Activated CD4-positive, alpha-beta T cell treated with anti-CD3 and anti-CD28 coated beads, Interleukin-2, amount 10 ng/mL, durations not matched to agents 24 days and 14 days (primary cell): ENCODE measurements at regions of chr13 and their contacts with region 1.

Region 1: GRCh38 chr13:77184455-77184854 is 142.4 kb downstream of the MYCBP2 start:
- DNase-seq: peak; percentile 70
- H3K4me3 Mint-ChIP-seq: peak overlapping the region; percentile 21
- H3K27ac Mint-ChIP-seq: peak overlapping the region; percentile 76
- H3K4me1 Mint-ChIP-seq: peaks cover 15% of the 10 kb centered on the region
- H3K27me3 Mint-ChIP-seq: no peaks in the 10 kb centered on the region

Region 2: DNA sequence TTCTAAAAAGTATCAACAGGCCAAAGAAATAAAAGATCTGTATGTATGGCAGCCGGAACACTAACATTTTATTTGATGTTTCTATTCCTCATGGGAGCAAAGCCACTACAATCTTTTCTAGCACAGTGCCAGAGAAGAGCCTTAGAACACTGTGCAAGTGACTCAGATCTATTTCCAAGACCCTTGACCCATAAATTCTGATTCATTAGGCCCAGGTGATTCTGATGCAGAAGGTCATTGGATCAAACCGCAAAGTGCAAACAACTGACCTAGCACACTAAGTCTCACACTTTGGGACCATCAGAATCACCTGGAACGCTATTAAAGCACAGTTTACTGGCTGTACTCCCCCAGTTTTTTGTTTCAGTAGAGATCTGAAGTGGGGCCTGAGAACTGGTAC is 54.9 kb after region 1 on chr13:
- intact Hi-C with region 1: loop called (anchors 10 kb)
- DNase-seq: no peak
- H3K4me3 Mint-ChIP-seq: no peak overlapping the region
- H3K27ac Mint-ChIP-seq: no peak overlapping the region
- H3K4me1 Mint-ChIP-seq: peaks cover 7% of the 10 kb centered on the region
- H3K27me3 Mint-ChIP-seq: no peaks in the 10 kb centered on the region

Region 3: GRCh38 chr13:77291774-77292173 is 107.3 kb after region 1 on chr13:
- intact Hi-C with region 1: loop called (anchors 1 kb)
- DNase-seq: no peak
- H3K4me3 Mint-ChIP-seq: no peak overlapping the region
- H3K27ac Mint-ChIP-seq: peak overlapping the region; percentile 26
- H3K4me1 Mint-ChIP-seq: peaks cover 32% of the 10 kb centered on the region
- H3K27me3 Mint-ChIP-seq: no peaks in the 10 kb centered on the region

Region 4: DNA sequence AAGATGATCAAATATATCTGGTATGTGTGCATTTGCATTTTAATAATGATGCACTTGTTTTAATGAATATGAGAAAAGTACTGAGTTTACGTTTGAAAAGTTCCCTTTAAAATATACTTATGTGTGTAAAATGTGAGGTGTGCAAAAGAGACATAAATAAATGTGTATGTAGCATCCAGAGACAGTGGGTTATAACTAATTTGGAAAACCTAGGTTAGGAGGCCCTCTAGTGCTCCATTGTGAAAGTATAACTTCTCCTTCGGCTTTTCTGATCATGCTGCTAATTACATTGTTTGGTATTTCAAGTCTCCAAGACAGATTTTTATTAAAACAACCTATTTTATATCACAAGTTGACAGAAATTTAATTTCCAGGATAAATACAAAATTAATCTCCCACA is 381.2 kb after region 1 on chr13:
- intact Hi-C with region 1: no loop called
- DNase-seq: no peak
- H3K4me3 Mint-ChIP-seq: no peak overlapping the region
- H3K27ac Mint-ChIP-seq: no peak overlapping the region
- H3K4me1 Mint-ChIP-seq: no peaks in the 10 kb centered on the region
- H3K27me3 Mint-ChIP-seq: peaks cover 7% of the 10 kb centered on the region